Activated B cell treated with CpG ODN at 0.5 μM for 24 hours (primary cell): ENCODE measurements at regions of chr11 and their contacts with region 1.

Region 1: DNA sequence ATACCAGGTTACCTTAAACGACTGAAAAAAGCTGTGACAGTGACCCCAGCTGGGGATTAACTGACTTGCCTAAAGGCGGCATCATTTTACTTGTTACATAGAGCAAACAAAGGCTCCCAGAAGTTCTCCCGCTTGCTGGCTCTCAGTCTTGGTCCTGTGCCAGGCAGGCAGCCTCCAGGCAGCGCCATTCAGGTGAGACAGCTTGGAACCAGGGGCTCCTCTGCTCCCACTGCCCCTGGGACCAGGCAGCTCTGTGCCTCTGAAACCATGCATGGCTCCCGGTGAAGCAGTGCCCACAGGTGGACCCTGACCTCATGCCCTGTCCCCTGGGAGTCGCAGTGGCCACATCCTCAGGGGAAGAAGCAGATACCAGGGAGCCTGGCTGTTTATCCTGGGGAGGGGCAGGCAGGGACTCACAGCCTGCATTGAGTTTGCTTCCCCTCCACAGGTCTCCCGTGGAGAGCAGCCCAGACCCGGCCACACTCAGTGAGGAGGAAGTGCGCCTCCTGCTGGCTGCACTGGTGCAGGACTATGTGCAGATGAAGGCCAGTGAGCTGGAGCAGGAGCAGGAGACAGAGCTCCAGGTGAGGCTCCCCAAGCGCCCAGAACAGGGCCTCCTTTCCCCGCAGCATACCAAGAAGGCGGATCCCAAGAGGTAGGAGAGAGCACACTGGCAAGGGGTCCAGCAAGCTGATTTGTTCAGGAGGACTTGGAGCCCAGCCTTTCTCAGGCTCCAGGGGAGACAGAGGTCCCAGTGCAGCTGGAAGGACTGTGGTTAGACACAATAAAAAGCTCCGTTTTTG is 15.6 kb upstream of the CYP2R1 start:
- DNase-seq: peak; percentile 73
- ATAC-seq: peak; percentile 47
- H3K4me3 Mint-ChIP-seq: no peak overlapping the region
- H3K27ac Mint-ChIP-seq: no peak overlapping the region
- H3K4me1 Mint-ChIP-seq: peaks cover 45% of the 10 kb centered on the region
- H3K27me3 Mint-ChIP-seq: peaks cover 2% of the 10 kb centered on the region
- CTCF ChIP-seq: no peak

Region 2: GRCh38 chr11:14237444-14237961 is 670.1 kb before region 1 on chr11:
- CTCF ChIA-PET with region 1: no interaction called
- POLR2A ChIA-PET with region 1: no interaction called
- intact Hi-C with region 1: loop called (anchors 1 kb)
- DNase-seq: peak; percentile 42
- ATAC-seq: peak; percentile 97
- H3K4me3 Mint-ChIP-seq: peak overlapping the region; percentile 42
- H3K27ac Mint-ChIP-seq: peak overlapping the region; percentile 89
- H3K4me1 Mint-ChIP-seq: peaks cover 39% of the 10 kb centered on the region
- H3K27me3 Mint-ChIP-seq: peaks cover 1% of the 10 kb centered on the region
- CTCF ChIP-seq: no peak

Region 3: GRCh38 chr11:14578541-14578956 is 329.1 kb before region 1 on chr11:
- CTCF ChIA-PET with region 1: interaction called, 4 read pairs
- POLR2A ChIA-PET with region 1: no interaction called
- intact Hi-C with region 1: loop called (anchors 1 kb)
- DNase-seq: no peak
- ATAC-seq: peak; percentile 94
- H3K4me3 Mint-ChIP-seq: peak overlapping the region; percentile 50
- H3K27ac Mint-ChIP-seq: peak overlapping the region; percentile 77
- H3K4me1 Mint-ChIP-seq: peaks cover 33% of the 10 kb centered on the region
- H3K27me3 Mint-ChIP-seq: peaks cover 1% of the 10 kb centered on the region
- CTCF ChIP-seq: no peak

Region 4: GRCh38 chr11:14892036-14892567 is 15.5 kb before region 1 on chr11 and contains the start of gene CYP2R1:
- CTCF ChIA-PET with region 1: interaction called, 73 read pairs
- POLR2A ChIA-PET with region 1: interaction called, 58 read pairs
- intact Hi-C with region 1: loop called (anchors 1 kb)
- DNase-seq: peak; percentile 85
- ATAC-seq: peak; percentile 84
- H3K4me3 Mint-ChIP-seq: peak within 1 kb of the TSS; percentile 94
- H3K27ac Mint-ChIP-seq: peak within 1 kb of the TSS; percentile 97
- H3K4me1 Mint-ChIP-seq: peaks cover 26% of the 10 kb centered on the region
- H3K27me3 Mint-ChIP-seq: no peaks in the 10 kb centered on the region
- CTCF ChIP-seq: no peak
- total RNA-seq, gene CYP2R1: 20.1 and 22.0 TPM in 2 replicates

Region 5: GRCh38 chr11:15101072-15101709 is 193.6 kb after region 1 on chr11:
- CTCF ChIA-PET with region 1: interaction called, 59 read pairs
- POLR2A ChIA-PET with region 1: no interaction called
- intact Hi-C with region 1: loop called (anchors 1 kb)
- DNase-seq: no peak
- ATAC-seq: peak; percentile 84
- H3K4me3 Mint-ChIP-seq: no peak overlapping the region
- H3K27ac Mint-ChIP-seq: no peak overlapping the region
- H3K4me1 Mint-ChIP-seq: peaks cover 6% of the 10 kb centered on the region
- H3K27me3 Mint-ChIP-seq: peaks cover 20% of the 10 kb centered on the region
- CTCF ChIP-seq: peak; percentile 84

Region 6: DNA sequence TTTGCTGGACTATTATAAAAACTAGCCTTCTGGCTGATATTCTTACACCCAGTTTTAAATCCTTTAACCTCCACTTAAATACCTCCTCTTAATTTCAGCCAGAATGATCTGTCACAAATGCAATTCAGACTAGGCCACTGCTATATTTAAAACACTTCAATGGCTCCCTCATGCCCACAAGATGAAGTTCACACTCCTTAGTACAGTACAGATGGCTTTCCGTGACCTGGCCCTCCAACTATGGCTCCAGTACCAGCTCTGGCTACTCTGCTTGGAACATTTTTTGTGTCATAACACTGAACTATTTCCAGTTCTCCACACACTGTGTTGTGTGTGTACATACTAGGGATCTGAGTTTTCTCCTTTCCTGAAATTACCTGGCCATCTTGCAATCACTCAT is 1095.3 kb after region 1 on chr11:
- CTCF ChIA-PET with region 1: no interaction called
- POLR2A ChIA-PET with region 1: no interaction called
- intact Hi-C with region 1: no loop called
- DNase-seq: no peak
- ATAC-seq: no peak
- H3K4me3 Mint-ChIP-seq: no peak overlapping the region
- H3K27ac Mint-ChIP-seq: no peak overlapping the region
- H3K4me1 Mint-ChIP-seq: no peaks in the 10 kb centered on the region
- H3K27me3 Mint-ChIP-seq: no peaks in the 10 kb centered on the region
- CTCF ChIP-seq: no peak

Region 7: GRCh38 chr11:16738193-16738946 is 1830.8 kb after region 1 on chr11 and contains the start of gene C11orf58:
- CTCF ChIA-PET with region 1: no interaction called
- POLR2A ChIA-PET with region 1: no interaction called
- intact Hi-C with region 1: loop called (anchors 2 kb)
- DNase-seq: peak; percentile 86
- ATAC-seq: peak; percentile 97
- H3K4me3 Mint-ChIP-seq: peak within 1 kb of the TSS; percentile 74
- H3K27ac Mint-ChIP-seq: no peak within 1 kb of the TSS
- H3K4me1 Mint-ChIP-seq: peaks cover 21% of the 10 kb centered on the region
- H3K27me3 Mint-ChIP-seq: no peaks in the 10 kb centered on the region
- CTCF ChIP-seq: no peak
- total RNA-seq, gene C11orf58: 112 and 130 TPM in 2 replicates